GM10248 (cell line): ENCODE measurements at regions of chr5 and their contacts with region 1.

Region 1: DNA sequence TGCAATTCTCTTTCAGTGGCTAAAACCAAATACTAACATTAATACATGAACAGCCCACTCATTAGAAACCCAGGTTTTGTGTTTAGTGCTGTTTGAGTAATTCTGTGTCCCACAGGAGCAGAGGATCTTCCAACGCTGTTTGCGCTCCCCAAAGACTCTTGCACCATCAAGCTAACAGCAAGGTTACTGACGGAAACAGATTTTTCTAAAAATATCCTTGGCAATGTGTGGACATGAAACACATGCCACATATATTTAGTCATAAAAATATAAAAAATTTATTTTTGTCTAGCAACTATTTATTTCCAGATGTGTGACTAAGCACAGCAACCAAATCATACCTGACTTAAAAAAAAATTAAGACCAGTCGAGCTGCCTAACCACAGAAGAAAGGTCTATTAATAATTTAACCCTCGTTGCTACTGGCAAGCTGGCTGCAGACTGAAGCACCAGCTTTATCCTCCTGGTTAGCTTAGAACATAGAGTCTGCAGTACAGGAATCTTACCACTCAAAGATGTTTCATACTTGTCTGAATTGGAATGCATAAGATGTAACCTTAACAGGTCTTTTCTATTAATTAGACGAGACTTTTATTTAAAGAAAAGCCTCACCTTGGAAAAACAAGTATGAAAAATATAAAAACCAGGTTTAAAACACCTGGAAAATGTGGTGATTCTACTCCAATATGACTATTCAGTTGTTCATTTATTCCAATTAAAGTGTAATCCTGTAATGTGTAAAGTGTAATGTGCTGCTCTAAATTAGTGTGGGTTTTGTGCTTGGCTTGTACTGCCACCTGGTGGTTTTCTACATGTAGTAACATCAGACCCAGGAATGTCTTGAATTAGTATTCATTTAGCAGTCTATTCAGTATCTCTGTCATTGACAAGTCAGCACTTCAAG is 272.5 kb downstream of the EPB41L4A start:
- DNase-seq: peak; percentile 49
- CTCF ChIP-seq: peak; percentile 50

Region 2: GRCh38 chr5:111550279-111551020 is 596.1 kb before region 1 on chr5:
- CTCF ChIA-PET with region 1: interaction called, 94 read pairs
- POLR2A ChIA-PET with region 1: no interaction called
- DNase-seq: peak; percentile 60
- CTCF ChIP-seq: peak; percentile 60

Region 3: DNA sequence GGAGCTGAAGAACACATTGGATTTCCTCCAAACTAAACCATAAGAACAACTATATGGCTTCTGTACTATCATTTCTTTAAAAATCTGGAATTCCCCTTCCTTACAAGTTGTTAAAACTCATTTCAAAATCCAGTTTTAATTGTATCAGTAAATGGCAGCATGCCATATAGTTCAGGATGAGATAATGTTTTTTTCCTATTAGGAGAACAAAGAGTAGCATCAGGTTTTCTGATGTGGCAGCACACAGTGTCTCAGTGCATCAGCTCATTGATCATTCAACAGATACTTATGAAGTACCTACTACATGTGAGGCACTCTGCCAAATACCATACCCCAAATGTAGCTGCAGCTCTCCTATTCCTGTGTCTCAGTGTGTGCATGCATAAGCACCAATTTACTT is 111.4 kb after region 1 on chr5:
- CTCF ChIA-PET with region 1: no interaction called
- POLR2A ChIA-PET with region 1: no interaction called
- DNase-seq: no peak
- CTCF ChIP-seq: no peak